Posterior vena cava (tissue), 2 donors: ENCODE measurements at regions of chr11 and their contacts with region 1.

Region 1: GRCh38 chr11:65961232-65961901 is at the start of gene SART1:
- DNase-seq: peak; percentile 99
- total RNA-seq, gene SART1: 41.1 to 46.2 TPM

Region 2: DNA sequence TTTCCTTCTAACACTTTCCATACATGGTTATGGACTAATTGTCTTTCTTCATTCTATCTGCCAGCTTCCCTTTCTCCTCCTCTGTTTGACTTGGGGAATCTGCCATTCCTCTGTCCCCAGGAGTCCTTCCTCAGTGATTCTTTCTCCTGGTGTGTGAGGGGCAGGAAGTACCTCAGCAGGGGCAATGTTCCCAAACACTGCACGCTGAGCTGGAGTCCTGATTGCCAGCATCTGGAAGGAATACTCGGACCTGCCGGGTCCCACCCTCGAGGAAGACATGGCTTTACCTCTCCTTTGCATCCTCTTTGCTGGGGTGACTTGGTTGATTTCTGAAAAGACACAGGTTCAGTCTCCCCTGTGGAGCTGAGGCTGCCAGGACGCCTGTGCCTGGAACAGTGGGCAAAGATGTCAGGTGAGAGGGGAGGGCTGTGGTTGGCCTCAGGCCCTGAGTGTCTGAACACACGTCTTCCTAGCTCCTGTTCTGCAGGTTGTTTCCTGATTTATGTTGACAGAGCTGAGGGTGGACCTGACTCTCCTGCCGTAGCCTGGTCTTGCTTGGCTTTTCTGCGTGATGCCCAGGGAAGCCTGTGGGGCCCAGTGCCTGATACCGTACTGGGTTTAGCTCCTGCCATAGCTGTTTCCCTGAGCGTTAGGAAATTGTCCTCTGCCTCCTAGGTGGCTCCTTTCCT is 1982.7 kb before region 1 on chr11:
- intact Hi-C with region 1: no loop called
- DNase-seq: no peak

Region 3: GRCh38 chr11:65558002-65558931 is 403.1 kb before region 1 on chr11 and contains the start of gene LTBP3:
- intact Hi-C with region 1: loop called in 1 of 2 experiments (anchors 5 kb)
- DNase-seq: peak; percentile 94
- total RNA-seq, gene LTBP3: 127 to 196 TPM

Region 4: DNA sequence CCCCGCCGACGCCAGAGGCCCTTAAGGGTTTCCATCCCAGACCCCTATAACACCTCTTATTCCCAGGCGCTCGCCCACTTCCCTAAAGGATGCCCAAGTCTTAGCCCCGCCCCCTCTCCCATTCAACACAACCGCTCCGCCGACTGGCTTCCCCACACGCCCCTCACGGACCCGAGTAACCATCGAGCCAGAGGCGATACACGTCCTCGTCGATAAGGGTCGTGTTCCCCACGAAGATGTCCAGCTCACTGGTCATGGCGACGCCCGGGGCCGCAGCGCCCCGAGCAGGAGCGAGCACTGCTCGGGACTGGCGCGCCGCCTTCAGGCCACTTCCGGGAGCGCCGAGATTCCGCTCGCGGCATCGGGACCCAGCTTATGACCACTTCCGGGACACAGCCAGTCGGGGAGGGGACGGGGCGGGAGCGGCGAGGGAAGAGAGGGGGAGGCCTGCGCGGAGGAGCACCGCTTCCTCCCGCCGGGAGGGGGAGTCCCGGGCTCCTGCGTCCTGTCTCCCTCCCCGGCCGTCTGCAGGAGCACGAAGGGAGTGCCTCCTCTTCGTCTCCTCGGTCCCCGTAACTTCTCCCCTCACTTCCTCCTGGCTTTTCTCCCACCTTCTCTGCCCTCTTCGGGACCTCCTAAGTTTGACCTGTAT is 73.1 kb before region 1 on chr11 and contains the start of gene FIBP:
- intact Hi-C with region 1: loop called in 1 of 2 experiments (anchors 10 kb)
- DNase-seq: peak; percentile 99
- total RNA-seq, gene FIBP: 39.7 to 40.8 TPM

Region 5: GRCh38 chr11:65919146-65920033 is 42.0 kb before region 1 on chr11 and contains the start of gene DRAP1:
- intact Hi-C with region 1: loop called in 1 of 2 experiments (anchors 5 kb)
- DNase-seq: peak; percentile 100
- total RNA-seq, gene DRAP1: 76.0 to 92.2 TPM

Region 6: DNA sequence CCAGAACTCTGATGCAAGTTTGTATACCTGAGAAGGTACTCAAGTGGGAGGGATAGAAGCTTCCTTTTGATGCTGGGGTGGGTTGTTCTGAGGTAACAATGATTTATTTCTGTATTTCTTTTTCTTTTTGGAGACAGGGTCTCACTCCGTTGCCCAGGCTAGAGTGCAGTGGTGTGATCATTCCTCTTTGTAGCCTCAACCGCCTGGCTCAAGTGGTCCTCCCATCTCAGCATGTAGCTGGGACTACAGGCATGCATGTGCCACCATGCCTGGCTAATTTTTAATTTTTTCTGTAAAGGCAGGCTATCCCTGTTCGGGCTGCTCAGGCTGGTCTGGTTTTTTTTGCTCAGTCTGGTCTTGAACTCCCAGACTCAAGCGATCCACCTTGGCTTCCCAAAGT is 1165.6 kb after region 1 on chr11:
- intact Hi-C with region 1: loop called in 1 of 2 experiments (anchors 5 kb)
- DNase-seq: peak; percentile 24